Right cardiac atrium (tissue), 5 donors: ENCODE measurements at regions of chr17 and their contacts with region 1.

Region 1: GRCh38 chr17:9522074-9522473 is 53.5 kb downstream of the STX8 start:
- DNase-seq: no peak
- ATAC-seq: peak; percentile 66 to 82
- H3K4me3 ChIP-seq: no peak overlapping the region
- H3K27ac ChIP-seq: no peak overlapping the region
- H3K4me1 ChIP-seq: no peaks in the 10 kb centered on the region
- H3K27me3 ChIP-seq: no peaks in the 10 kb centered on the region

Region 2: GRCh38 chr17:8447799-8448198 is 1074.3 kb before region 1 on chr17:
- intact Hi-C with region 1: no loop called
- DNase-seq: no peak
- ATAC-seq: no peak
- H3K4me3 ChIP-seq: no peak overlapping the region
- H3K27ac ChIP-seq: no peak overlapping the region
- H3K4me1 ChIP-seq: no peaks in the 10 kb centered on the region
- H3K27me3 ChIP-seq: no peaks in the 10 kb centered on the region

Region 3: GRCh38 chr17:8991514-8992285 is 530.4 kb before region 1 on chr17:
- intact Hi-C with region 1: loop called (anchors 5 kb)
- DNase-seq: peak in 2 of 3 donors; percentile 57 to 78
- ATAC-seq: peak; percentile 58 to 77
- H3K4me3 ChIP-seq: no peak overlapping the region
- H3K27ac ChIP-seq: no peak overlapping the region
- H3K4me1 ChIP-seq: no peaks in the 10 kb centered on the region
- H3K27me3 ChIP-seq: no peaks in the 10 kb centered on the region

Region 4: DNA sequence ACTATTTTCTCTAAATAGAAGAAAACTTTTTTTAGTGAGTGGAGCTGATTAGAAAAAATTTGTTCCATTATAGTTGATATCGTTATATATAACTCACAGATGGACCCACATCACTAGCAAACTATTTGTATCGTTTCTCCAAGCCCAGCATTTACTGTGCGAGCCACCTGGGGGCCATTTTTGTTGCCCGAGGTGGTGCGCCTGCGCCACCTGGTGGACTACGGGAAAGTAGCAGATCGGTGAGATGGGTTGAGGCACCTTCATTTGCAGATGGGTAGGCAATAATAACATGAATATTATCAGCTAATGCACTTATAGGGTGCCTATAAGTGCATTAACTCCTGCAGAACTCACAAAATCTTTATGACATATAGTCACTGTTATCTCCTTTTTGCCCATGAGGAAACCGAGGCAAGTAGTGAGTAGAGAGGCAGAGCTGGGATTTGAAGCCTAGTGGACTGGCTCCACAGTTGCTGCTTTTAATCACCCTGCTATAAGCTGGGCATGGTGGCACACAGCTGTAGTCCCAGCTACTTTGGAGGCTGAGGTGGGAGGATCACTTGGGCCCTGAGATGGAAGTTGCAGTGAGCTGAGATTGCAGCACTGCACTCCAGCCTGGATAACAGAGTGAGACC is 524.0 kb before region 1 on chr17:
- intact Hi-C with region 1: loop called (anchors 5 kb)
- DNase-seq: peak; percentile 55 to 83 (median 76)
- ATAC-seq: peak in 1 of 2 donors; percentile 39
- H3K4me3 ChIP-seq: no peak overlapping the region
- H3K27ac ChIP-seq: no peak overlapping the region
- H3K4me1 ChIP-seq: no peaks in the 10 kb centered on the region
- H3K27me3 ChIP-seq: no peaks in the 10 kb centered on the region

Region 5: DNA sequence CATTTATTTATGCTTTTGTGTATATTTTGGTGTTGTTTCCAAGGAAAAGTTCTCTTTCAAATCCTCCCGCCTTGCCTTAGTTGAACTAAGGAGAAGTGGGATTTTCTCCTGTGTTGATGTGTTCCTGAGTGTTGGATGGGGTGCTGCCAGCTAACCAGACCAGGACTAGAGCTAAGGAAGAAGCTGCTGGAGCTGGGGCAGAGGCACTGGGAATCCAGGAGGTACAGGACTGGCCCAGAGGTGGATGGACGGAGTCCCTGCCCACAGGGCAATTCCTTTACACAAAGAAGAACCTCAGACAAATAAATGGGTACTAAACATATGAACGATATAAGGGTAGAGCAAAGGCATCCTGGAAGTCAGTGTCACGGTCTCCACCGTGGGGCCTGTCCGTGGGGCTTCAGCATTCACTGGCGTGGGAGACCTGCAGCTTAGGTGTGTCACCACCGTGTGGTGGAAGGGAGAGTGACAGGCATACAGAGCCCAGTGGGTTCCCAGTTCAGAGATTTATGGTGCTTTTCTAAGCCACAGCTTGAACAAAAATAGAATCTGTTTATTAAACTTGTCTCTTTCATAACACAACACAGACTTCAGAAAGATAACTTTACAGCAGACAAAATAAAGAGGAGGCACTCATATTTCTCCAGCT is 230.0 kb before region 1 on chr17:
- intact Hi-C with region 1: loop called in 1 of 4 experiments (anchors 10 kb)
- DNase-seq: peak; percentile 54 to 80 (median 70)
- ATAC-seq: peak; percentile 93
- H3K4me3 ChIP-seq: no peak overlapping the region
- H3K27ac ChIP-seq: no peak overlapping the region
- H3K4me1 ChIP-seq: peaks cover 3% of the 10 kb centered on the region
- H3K27me3 ChIP-seq: no peaks in the 10 kb centered on the region